Testis (tissue), 5 donors: ENCODE measurements at regions of chr2 and their contacts with region 1.

Region 1: DNA sequence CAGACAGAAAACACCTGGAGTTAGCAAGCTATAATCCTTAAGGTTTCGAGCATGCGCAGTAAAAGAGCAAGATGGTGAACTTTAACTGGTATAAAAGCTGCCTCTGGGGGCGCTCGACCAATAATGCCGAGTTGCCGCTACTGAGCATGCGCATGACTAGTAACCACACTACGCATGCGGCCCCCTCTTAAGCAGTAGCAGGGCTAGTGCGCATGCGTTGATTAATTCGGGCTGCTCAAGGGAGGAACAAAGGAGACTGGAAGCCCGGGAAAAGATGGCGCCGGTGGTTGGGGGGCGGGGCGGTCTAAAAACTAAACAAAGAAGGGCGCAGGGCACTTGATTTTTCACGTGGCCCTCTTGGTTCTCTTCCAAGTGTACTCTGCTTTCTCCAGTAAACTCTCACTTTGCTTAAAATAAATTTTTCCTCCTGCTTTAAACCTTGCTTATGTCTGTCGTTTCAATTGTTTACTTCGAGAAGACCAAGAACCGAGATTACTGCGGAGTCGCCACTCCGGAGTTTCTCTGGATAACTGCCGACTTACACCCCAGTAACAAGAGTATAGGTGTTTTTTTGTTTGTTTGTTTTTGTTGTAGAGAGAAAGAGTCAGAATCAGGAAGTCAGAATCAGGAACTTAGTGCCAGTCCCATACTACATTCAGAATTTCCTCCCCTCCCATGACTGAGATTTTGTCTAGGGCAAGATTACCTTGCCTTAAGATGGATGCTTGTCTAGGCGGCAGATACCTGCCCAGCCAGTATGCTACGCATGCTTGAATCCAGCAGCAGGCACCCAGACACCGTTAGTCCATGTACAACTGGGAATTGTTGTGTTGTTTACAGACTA is 5.8 kb downstream of the XRCC5 start:
- DNase-seq: peak; percentile 99
- H3K4me3 ChIP-seq: peak overlapping the region; percentile 58 to 71
- H3K27ac ChIP-seq: peak overlapping the region; percentile 82 to 87
- H3K4me1 ChIP-seq: peaks cover 24% of the 10 kb centered on the region
- H3K27me3 ChIP-seq: no peaks in the 10 kb centered on the region
- CTCF ChIP-seq: peak; percentile 89 to 99 (median 98)
- POLR2A ChIP-seq: no peak

Region 2: GRCh38 chr2:216274194-216274840 is 159.4 kb after region 1 on chr2:
- intact Hi-C with region 1: no loop called
- DNase-seq: no peak
- H3K4me3 ChIP-seq: no peak overlapping the region
- H3K27ac ChIP-seq: no peak overlapping the region
- H3K4me1 ChIP-seq: no peaks in the 10 kb centered on the region
- H3K27me3 ChIP-seq: no peaks in the 10 kb centered on the region
- CTCF ChIP-seq: no peak
- POLR2A ChIP-seq: no peak

Region 3: DNA sequence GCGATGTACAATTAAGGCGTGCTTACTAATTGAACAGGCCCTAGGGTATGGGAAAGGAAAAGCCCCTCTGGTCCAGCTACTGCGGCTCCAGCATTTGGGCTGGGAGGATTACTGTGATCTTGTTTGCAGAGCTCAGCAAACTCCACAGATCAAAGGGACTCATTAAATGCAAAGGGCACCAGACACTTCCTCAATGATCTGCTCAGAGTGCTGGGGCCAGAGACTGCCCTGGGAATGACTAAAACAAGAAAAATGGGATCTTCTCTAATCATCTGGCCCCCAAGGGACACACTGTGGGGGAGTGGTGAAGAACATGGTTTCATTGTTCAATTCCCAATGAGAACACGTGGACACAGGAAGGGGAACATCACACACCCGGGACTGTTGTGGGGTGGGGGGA is 172.3 kb after region 1 on chr2:
- intact Hi-C with region 1: no loop called
- DNase-seq: no peak
- H3K4me3 ChIP-seq: no peak overlapping the region
- H3K27ac ChIP-seq: no peak overlapping the region
- H3K4me1 ChIP-seq: no peaks in the 10 kb centered on the region
- H3K27me3 ChIP-seq: no peaks in the 10 kb centered on the region
- CTCF ChIP-seq: no peak
- POLR2A ChIP-seq: no peak

Region 4: GRCh38 chr2:216404010-216404618 is 289.2 kb after region 1 on chr2:
- intact Hi-C with region 1: loop called (anchors 10 kb)
- DNase-seq: peak; percentile 54
- H3K4me3 ChIP-seq: no peak overlapping the region
- H3K27ac ChIP-seq: no peak overlapping the region
- H3K4me1 ChIP-seq: no peaks in the 10 kb centered on the region
- H3K27me3 ChIP-seq: no peaks in the 10 kb centered on the region
- CTCF ChIP-seq: peak; percentile 42 to 76 (median 69)
- POLR2A ChIP-seq: no peak